Endothelial cell of umbilical vein (primary cell): ENCODE measurements at regions of chr21 and their contacts with region 1.

Region 1: GRCh38 chr21:33682992-33683627 is 40.8 kb downstream of the ITSN1 start:
- DNase-seq: peak; percentile 90
- H3K4me3 ChIP-seq: no peak overlapping the region
- H3K27ac ChIP-seq: peak overlapping the region; percentile 93
- H3K4me1 ChIP-seq: peaks cover 44% of the 10 kb centered on the region
- H3K27me3 ChIP-seq: no peaks in the 10 kb centered on the region
- CTCF ChIP-seq: no peak
- POLR2A ChIP-seq: no peak

Region 2: DNA sequence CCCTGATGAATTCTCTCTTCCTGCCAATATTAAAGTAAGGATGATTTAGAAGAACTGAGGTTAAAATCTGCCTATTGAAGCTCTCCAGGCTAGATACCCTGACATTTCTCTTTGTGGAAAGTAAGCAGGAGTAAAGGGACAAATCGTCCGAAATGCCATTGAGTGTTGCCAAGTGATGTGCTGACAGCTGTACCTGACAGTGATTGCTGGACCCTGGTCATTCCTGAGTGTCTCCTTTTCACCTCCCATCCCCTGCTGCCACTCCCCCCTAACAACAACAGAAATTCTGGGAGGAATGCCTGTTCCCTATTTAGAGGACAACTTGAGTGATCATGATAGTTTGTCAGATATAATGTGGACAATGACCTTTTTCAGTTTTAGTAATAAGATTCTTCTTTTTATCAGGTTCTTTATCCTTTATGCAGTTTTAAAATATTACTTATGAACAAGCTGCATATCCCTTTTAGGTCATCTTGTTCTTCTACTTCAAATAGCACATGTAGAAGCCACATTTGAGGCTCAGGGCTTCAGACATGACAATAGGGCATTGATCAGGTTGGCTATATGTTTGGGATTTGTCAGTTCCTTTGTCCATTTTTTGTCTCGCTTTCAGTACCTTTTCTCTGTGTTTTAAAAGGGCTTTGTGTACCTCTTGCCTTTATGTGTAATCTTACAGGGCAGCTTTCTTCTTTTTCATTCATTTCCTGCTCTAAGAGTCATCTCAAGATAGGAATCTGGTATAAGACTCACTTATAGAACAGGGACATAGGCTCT is 15.2 kb after region 1 on chr21:
- CTCF ChIA-PET with region 1: interaction called, 24 read pairs
- POLR2A ChIA-PET with region 1: no interaction called
- dilution Hi-C with region 1: no loop called
- intact Hi-C with region 1: no loop called
- DNase-seq: peak; percentile 43
- H3K4me3 ChIP-seq: no peak overlapping the region
- H3K27ac ChIP-seq: no peak overlapping the region
- H3K4me1 ChIP-seq: peaks cover 14% of the 10 kb centered on the region
- H3K27me3 ChIP-seq: no peaks in the 10 kb centered on the region
- CTCF ChIP-seq: no peak
- POLR2A ChIP-seq: no peak

Region 3: GRCh38 chr21:33703750-33704606 is 20.9 kb after region 1 on chr21:
- CTCF ChIA-PET with region 1: interaction called, 24 read pairs
- POLR2A ChIA-PET with region 1: interaction called, 8 read pairs
- dilution Hi-C with region 1: no loop called
- intact Hi-C with region 1: no loop called
- DNase-seq: peak; percentile 51
- H3K4me3 ChIP-seq: no peak overlapping the region
- H3K27ac ChIP-seq: peak overlapping the region; percentile 34
- H3K4me1 ChIP-seq: peaks cover 14% of the 10 kb centered on the region
- H3K27me3 ChIP-seq: no peaks in the 10 kb centered on the region
- CTCF ChIP-seq: no peak
- POLR2A ChIP-seq: no peak